Dendritic cell treated with granulocyte-macrophage colony-stimulating factor and Interleukin-4, amounts not matched to agents 40 ng/mL and 50 ng/mL, for 4 days (primary cell): ENCODE measurements at regions of chr1 and their contacts with region 1.

Region 1: DNA sequence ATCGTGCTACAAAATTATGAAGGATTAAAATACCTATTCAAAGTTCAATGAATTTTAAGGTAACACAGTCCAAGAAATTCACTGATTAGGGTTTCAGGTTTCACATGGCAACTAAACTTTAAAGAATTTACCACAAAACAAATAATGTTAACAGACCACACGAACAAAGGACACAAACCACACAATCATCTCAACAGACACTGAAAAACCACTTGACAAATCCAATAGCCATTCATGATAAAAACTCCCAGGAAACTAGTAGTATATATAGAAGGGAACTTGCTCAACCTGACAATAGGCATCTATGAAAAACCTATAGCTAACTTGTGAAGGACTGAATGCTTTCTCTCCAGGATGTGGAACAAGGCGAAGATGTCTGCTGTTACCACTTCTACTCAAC is 21.1 kb upstream of the SH2D5 start:
- H3K4me3 Mint-ChIP-seq: no peak overlapping the region
- H3K27ac Mint-ChIP-seq: no peak overlapping the region
- H3K4me1 Mint-ChIP-seq: no peaks in the 10 kb centered on the region
- H3K27me3 Mint-ChIP-seq: no peaks in the 10 kb centered on the region

Region 2: DNA sequence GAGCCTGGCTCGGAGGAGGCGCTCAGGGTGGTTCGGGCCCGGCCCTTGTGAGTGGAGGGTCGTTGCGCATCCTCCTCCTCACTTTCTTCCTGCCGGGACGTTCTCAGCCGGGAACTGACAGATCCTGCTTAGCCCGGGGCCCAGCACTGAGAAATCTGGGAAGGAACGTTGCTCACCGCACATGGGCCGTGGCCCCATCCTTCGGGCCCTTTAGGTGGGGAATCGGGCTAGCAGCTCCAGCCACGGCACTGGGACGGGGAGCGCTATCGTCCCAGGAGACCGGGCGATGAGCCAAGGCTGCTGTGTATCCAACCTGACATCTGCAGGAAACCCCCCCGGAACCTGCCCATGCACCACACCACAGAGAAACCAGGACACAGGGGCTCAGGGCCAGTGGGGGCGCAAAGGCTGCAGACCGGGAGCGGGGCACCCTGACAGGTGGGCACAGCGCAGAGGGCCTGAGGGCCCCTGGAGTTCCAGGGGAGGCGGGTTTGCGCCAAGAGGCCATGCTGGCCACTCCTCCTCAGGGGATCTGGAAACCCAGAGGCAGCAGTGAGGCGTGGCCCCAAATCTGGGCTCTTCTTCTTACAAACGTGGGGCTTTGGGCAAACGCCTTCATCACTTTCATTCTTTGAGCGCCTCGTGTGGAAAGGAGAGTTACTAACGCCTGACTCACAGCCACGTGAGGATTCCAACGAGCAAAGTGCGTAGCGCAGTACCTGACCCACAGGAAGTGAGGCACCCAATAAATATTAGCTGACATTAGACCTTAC is 20.8 kb before region 1 on chr1 and contains the start of gene SH2D5:
- intact Hi-C with region 1: no loop called
- H3K4me3 Mint-ChIP-seq: peak within 1 kb of the TSS; percentile 87
- H3K27ac Mint-ChIP-seq: peak within 1 kb of the TSS; percentile 15
- H3K4me1 Mint-ChIP-seq: peaks cover 26% of the 10 kb centered on the region
- H3K27me3 Mint-ChIP-seq: peaks cover 57% of the 10 kb centered on the region

Region 3: GRCh38 chr1:20847611-20848080 is 94.1 kb after region 1 on chr1:
- intact Hi-C with region 1: loop called (anchors 10 kb)
- H3K4me3 Mint-ChIP-seq: no peak overlapping the region
- H3K27ac Mint-ChIP-seq: no peak overlapping the region
- H3K4me1 Mint-ChIP-seq: no peaks in the 10 kb centered on the region
- H3K27me3 Mint-ChIP-seq: no peaks in the 10 kb centered on the region